ENCODE measurements at regions of chr3 and their contacts with region 1.

Region 1: DNA sequence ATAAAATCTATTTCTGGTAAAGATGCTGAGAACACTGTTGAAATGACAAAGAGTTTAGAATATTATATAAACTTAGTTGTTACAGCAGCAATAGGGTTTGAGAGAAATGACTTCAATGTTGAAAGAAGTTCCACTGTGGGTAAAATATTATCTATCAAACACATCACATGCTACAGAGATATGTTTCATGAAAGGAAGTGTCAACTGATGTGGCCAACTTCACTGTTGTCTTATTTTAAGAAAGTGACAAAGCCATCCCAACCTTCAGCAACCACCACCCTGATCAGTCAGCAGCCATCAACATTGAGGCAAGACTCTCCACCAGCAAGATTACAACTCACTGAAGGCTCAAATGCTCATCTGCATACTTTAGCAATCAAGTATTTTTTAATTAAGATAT is 20.2 kb downstream of the TMEM39A start:
- DNase-seq: no peak
- H3K4me3 ChIP-seq: no peak overlapping the region
- H3K27ac ChIP-seq: no peak overlapping the region
- H3K27me3 ChIP-seq: no peaks in the 10 kb centered on the region
- CTCF ChIP-seq: no peak

Region 2: DNA sequence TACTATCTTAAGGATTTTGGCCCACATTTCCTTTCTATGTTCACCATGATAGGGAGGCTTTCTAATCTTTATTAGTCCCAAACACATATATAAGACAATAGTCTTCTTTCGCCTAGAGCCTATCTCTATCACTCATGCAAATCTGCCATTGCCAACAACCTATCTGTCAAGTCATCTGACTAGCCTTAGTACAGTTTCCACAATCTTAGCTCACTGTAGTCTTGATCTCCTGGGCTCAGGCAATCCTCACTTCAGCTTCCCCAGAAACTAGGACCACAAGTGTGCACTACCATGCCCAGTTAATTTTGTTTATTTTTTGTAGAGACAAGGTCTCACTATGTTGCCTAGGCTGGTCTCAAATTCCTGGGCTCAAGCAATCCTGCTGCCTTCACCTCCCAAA is 13.3 kb after region 1 on chr3:
- CTCF ChIA-PET with region 1: interaction called, 10 read pairs
- POLR2A ChIA-PET with region 1: no interaction called
- DNase-seq: no peak
- H3K4me3 ChIP-seq: no peak overlapping the region
- H3K27ac ChIP-seq: no peak overlapping the region
- H3K27me3 ChIP-seq: no peaks in the 10 kb centered on the region
- CTCF ChIP-seq: no peak

Region 3: DNA sequence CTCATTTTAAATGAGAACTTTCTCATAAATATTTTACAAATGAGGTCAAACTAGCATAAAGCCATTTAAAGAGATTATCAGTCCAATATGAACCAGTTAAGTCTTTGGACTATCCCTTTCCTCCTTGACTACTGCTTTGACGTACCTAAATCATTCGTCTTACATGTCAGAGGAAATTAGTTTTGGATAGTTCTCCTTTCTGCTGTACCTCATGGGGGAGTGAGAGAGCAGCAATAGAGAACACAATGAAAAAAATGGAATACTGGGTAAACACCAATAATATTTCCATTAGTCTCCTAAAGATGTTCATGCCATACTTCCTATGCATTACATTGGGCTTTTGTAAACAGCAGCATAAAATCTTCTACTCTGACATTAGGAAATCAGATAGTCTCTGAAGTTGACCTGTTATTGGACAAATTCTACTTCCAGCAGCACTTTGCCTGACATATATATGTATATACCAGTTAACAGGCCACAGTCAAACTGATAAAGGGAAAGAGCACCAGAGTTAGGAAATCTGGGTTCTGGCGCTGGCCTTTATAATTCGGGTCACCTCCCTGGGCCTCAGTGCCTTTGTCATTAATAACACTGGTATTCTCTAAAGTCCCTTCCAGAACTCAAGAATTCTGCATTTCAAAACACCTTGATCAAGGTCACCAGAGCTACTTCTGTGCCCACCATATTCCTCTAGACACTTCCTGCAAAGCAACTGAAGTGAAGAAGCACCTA is 81.9 kb after region 1 on chr3:
- CTCF ChIA-PET with region 1: no interaction called
- POLR2A ChIA-PET with region 1: no interaction called
- DNase-seq: no peak
- H3K4me3 ChIP-seq: no peak overlapping the region
- H3K27ac ChIP-seq: no peak overlapping the region
- H3K27me3 ChIP-seq: no peaks in the 10 kb centered on the region
- CTCF ChIP-seq: peak; percentile 51

Region 4: DNA sequence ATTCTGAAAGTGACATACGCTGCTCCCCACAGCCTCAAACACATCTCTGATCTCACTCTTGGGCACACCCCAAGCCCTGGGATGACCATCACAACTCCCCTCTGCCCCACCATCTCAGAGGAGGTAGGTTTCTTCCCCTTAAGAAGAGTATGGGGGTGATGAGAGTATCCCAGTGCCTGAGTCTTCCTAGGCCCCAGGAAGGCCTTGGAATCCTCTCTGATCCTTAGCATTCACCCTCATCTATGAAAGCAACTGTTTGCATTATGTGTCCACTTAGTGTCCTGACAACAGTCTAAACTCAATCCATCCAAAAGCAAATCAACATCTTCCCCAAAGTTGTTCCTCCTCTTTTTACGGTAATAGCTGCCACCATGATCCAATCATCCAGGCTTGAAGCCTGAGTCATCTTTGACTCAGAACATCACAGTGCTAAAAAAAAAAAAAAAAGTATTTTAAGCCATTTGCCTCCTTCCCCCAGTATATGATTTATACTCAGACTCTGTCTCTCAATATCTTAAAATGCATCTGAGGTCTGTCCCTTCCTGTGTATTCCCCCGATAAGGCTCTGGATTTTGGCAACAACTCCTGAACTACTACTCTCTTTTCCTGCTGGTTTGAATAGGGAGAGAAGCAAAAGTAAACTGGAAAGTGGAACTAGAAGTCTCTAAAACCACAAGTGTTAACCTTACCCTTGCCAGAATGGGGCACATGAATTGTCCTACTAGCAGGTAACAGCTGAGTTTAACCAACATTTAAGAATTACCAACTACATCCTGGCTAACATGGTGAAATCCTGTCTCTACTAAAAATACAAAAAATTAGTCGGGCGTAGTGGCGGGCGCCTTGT is 194.7 kb after region 1 on chr3:
- CTCF ChIA-PET with region 1: no interaction called
- POLR2A ChIA-PET with region 1: no interaction called
- DNase-seq: peak; percentile 44
- H3K4me3 ChIP-seq: no peak overlapping the region
- H3K27ac ChIP-seq: peak overlapping the region; percentile 90
- H3K27me3 ChIP-seq: no peaks in the 10 kb centered on the region
- CTCF ChIP-seq: no peak

Measured in AG04450 (cell line).